ENCODE measurements at regions of chr17 and their contacts with region 1.

Region 1: GRCh38 chr17:49952209-49952911 is 16.6 kb upstream of the DLX4 start:
- DNase-seq: peak; percentile 85
- CTCF ChIP-seq: peak; percentile 98

Region 2: GRCh38 chr17:49523706-49524472 is 428.5 kb before region 1 on chr17:
- CTCF ChIA-PET with region 1: no interaction called
- POLR2A ChIA-PET with region 1: no interaction called
- DNase-seq: no peak
- CTCF ChIP-seq: no peak

Region 3: DNA sequence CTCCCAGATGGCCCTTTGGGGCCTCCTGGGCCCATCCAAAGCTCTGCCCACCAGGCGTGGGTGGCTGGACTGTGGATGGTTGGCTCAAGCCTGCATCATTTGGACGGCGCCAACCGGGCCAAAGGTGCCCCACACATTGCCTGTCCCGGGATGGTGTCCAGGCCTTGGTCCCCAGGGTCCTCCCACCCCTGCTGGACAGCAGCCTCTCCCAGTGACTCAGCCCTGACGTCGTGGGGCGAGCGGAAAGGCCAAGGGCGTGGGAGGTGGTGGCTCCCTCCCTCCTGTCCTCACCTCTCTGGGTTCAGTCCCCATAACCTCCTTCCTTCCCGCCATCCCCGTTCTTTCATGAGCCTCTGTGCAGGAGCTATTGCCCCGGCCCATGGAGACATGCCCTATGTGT is 25.5 kb before region 1 on chr17:
- CTCF ChIA-PET with region 1: interaction called, 10 read pairs
- POLR2A ChIA-PET with region 1: no interaction called
- DNase-seq: no peak
- CTCF ChIP-seq: no peak

Region 4: DNA sequence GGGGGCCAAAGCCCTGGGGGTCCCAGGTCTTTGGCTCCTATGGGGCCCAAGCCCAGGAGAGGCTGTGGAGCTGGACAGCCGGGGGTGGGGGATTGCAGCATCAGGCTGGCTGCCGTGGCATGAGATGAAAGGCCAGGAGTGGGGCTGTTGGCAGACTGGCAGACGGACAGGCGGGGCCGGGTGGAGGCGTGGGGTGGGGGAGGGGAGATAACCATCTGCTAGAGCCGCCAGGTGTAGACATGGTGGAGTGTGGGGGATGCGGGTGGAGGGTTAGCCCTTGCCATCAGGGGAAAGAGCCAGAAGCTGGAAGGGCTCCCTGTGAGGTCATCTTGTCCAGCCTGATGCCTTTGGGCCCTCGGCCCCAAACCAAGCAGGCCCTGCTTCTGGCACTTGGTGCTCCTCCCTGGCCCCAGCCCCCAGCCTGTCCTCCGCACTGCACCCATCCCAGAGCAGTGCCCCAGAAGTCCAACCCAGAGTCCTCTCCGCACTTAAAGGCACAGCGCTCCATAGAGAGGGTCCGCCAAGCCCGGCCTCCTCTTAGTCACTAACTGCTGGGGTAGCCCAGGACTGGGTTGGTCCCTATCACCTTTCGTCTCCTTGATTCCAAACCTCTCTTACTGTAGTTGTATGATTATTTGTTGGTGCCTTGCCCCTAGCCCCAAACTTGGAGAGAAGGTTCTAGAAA is 16.7 kb before region 1 on chr17:
- CTCF ChIA-PET with region 1: interaction called, 19 read pairs
- POLR2A ChIA-PET with region 1: no interaction called
- DNase-seq: no peak
- CTCF ChIP-seq: no peak

Region 5: GRCh38 chr17:49963626-49964302 is 11.4 kb after region 1 on chr17:
- CTCF ChIA-PET with region 1: interaction called, 14 read pairs
- POLR2A ChIA-PET with region 1: no interaction called
- DNase-seq: no peak
- CTCF ChIP-seq: no peak

Region 6: DNA sequence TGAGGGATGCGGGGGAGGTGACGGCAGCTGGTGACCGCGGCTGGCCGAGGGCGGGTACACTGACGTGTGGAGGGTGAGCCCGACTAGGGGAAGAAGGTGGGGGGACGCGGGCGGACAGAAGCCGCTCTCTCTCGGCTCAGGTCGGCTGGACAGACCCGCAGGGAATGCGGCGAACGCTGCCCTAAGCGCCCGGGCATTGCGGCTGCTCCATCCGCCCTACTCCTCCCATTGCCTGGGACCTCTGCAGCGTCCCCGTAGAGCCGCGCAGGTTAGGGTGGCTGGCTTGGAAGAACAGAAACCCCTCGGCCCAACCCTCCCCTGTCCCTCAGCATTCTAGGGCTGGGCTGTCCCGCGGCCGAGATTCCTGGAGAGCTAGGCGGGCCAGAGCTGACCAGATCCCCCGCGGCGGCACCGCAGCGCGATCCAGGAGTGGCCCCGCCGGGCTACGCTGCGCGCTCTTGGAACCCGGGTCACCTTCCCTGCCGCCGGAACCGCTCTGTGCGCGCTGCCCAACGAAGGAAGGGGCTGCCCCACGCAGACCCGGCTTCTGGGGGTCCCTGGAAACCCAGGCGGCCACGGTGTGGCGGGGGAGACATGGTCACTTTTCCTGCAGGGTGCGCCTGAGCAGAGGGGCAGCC is 19.6 kb after region 1 on chr17:
- CTCF ChIA-PET with region 1: interaction called, 10 read pairs
- POLR2A ChIA-PET with region 1: no interaction called
- DNase-seq: no peak
- CTCF ChIP-seq: no peak

Region 7: DNA sequence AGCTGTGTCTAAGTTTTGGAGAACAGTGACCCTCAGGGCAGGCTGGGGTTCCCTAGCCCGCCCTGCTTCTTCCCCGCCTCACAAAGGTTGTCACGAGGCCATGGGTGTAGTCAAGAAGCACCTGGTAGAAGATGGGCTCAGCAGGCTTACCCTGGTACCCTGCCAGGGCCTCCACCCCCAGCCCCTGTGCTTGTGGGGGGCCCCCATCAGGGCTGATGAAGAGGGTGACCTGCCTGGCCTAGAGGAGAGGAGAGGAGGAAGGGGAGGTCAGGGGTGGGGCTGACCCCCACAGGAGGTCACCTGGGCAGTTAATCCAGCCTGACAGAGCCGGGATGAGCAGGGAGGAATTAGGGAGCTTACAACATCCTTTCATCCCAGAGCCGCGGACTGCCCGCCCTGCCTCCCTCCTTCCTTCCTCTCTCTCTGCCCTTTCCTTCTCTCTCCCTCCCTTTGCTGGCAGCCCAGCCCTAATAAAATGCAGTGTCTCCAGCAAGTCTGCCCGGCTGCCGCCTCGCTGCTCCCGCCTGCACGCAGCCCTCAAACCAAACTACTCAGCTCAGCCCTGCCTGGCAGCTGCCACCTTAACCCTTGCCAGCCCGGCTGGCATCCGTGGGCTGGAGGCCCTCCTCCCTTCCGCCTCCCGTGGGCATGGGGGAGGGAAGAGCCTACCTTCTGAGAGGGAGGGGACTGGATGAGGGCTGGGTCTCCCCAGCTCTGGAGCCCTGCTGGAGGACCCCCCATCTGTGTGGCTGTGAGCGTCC is 35.5 kb after region 1 on chr17:
- CTCF ChIA-PET with region 1: interaction called, 13 read pairs
- POLR2A ChIA-PET with region 1: no interaction called
- DNase-seq: no peak
- CTCF ChIP-seq: no peak

Region 8: DNA sequence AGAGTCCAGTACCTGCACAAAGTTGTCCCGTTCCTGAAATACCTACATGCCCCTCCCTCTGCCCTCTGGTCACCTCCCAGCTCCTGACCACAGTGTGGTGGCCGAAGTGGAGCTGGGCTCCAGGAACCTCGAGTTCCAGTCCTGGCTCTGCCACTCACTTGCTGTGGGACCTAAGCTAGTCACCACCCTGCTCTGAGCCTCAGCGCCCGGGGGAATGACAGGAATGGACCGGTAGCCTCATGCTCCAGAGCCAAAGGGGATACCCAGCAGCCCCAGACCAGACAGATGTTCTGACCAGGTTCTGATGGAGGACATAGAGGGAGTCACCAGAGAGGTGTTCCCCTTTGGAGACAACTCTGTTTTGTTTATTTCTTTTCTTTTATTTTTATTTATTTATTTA is 76.9 kb after region 1 on chr17:
- CTCF ChIA-PET with region 1: no interaction called
- POLR2A ChIA-PET with region 1: no interaction called
- DNase-seq: no peak
- CTCF ChIP-seq: no peak

Measured in GM10248 (cell line).